Adrenal gland (tissue), 19 donors: ENCODE measurements at regions of chr21 and their contacts with region 1.

Region 1: GRCh38 chr21:33641336-33642026 is at the start of gene CRYZL1:
- DNase-seq: peak; percentile 100
- H3K4me3 ChIP-seq: peak within 1 kb of the TSS; percentile 59 to 96 (median 75)
- H3K27ac ChIP-seq: peak within 1 kb of the TSS; percentile 64 to 86 (median 84)
- H3K4me1 ChIP-seq: peaks cover 12 to 26% of the 10 kb centered on the region in 2 donors
- H3K27me3 ChIP-seq: no peaks in the 10 kb centered on the region
- CTCF ChIP-seq: no peak
- POLR2A ChIP-seq: peak; percentile 43 to 61
- total RNA-seq, gene CRYZL1: 14.0 to 37.4 (median 26.4) TPM

Region 2: GRCh38 chr21:33578959-33579542 is 62.4 kb before region 1 on chr21:
- intact Hi-C with region 1: no loop called
- DNase-seq: no peak
- H3K4me3 ChIP-seq: no peak overlapping the region
- H3K27ac ChIP-seq: no peak overlapping the region
- H3K4me1 ChIP-seq: no peaks in the 10 kb centered on the region
- H3K27me3 ChIP-seq: no peaks in the 10 kb centered on the region
- CTCF ChIP-seq: no peak
- POLR2A ChIP-seq: no peak

Region 3: GRCh38 chr21:33817663-33818451 is 176.4 kb after region 1 on chr21:
- intact Hi-C with region 1: loop called in 1 of 2 experiments (anchors 10 kb)
- DNase-seq: peak in 2 of 7 donors; percentile 34 to 48
- H3K4me3 ChIP-seq: no peak overlapping the region
- H3K27ac ChIP-seq: peak overlapping the region in 1 of 5 donors; percentile 20
- H3K4me1 ChIP-seq: peaks cover 7 to 19% of the 10 kb centered on the region in 2 donors
- H3K27me3 ChIP-seq: no peaks in the 10 kb centered on the region
- CTCF ChIP-seq: no peak
- POLR2A ChIP-seq: no peak

Region 4: DNA sequence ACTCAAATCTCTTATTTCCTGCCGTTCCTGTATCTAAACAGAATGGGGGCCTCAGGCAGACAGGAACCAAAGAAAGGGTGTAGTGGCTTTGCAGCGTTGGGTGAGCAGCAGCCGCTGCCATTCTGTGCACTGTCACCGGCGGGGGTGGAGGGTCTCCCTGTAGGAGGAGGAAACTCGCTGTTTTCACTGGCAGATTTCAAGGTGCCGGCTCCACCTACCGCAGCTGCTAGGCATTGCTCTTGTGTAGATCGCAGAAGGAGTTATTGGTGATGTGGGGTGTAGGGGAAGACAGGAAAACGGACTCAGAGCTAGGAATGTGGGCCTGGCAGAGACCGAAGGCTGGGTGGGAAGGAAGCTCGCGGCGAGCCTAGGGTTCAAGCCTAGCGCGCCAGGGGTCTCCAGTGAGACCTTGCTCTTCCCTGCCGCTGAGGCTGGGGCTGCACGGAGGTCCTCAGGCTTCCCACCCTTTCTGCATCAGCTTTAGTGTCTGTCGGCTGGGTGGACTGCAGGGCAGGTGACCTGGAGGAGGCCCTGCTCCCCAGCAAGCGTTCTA is 253.3 kb after region 1 on chr21:
- intact Hi-C with region 1: loop called (anchors 5 to 10 kb)
- DNase-seq: peak; percentile 74 to 92 (median 86)
- H3K4me3 ChIP-seq: peak overlapping the region in 2 of 4 donors; percentile 5 to 58
- H3K27ac ChIP-seq: no peak overlapping the region
- H3K4me1 ChIP-seq: peaks cover 8 to 16% of the 10 kb centered on the region in 2 donors
- H3K27me3 ChIP-seq: no peaks in the 10 kb centered on the region
- CTCF ChIP-seq: peak; percentile 59 to 86 (median 78)
- POLR2A ChIP-seq: no peak

Region 5: DNA sequence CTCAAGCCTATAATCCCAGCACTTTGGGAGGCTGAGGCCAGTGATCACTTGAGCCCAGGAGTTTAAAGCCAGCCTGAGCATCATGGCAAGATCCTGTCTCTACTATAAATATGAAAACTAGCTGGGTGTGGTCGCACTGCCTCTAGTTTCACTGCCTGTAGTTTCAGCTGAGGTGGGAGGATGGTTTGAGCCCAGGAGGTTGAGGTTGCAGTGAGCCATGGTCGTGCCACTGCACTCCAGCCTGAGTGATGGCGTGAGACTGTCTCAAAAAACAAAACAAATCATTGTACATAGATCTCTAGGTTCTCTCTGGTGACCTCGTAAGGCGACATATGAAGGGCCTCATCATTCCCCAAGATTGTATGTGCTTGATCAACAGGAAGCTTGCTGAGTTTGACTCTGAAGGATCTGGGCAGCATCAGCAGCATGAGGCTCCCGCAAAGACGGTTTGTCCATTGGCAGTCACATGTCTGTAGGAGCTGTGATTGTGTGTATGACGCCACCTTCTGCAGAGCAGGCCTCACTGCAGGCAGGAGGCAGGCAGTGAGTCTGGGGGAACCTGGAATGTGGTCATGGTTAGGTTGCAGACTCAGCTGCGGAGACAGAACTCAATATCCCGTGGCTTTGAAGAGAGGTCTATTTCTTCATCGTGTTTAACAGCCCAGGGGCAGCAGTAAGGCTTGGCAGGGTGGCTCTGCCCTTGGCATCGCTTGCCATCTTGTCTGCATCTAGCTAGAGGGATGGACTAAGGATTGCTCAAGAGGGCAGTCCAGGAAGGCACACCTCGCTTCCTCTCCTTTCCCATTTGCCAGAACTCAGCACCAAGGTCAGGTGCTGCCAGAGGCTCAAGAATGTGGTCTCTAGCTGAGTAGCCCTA is 260.2 kb after region 1 on chr21:
- intact Hi-C with region 1: loop called (anchors 5 to 10 kb)
- DNase-seq: peak in 6 of 7 donors; percentile 38 to 76 (median 61)
- H3K4me3 ChIP-seq: no peak overlapping the region
- H3K27ac ChIP-seq: peak overlapping the region in 1 of 5 donors; percentile 57
- H3K4me1 ChIP-seq: peaks cover 0 to 11% of the 10 kb centered on the region in 2 donors
- H3K27me3 ChIP-seq: no peaks in the 10 kb centered on the region
- CTCF ChIP-seq: peak; percentile 20 to 62 (median 44)
- POLR2A ChIP-seq: no peak